ENCODE measurements at regions of chr20 and their contacts with region 1.

Region 1: GRCh38 chr20:37270576-37271420 is 9.2 kb upstream of the GHRH start:
- DNase-seq: peak in 1 of 9 experiments; percentile 40
- ATAC-seq: no peak
- H3K4me3 ChIP-seq: no peak overlapping the region
- H3K4me3 Mint-ChIP-seq: no peak overlapping the region
- H3K27ac ChIP-seq: no peak overlapping the region
- H3K27ac Mint-ChIP-seq: no peak overlapping the region
- H3K4me1 ChIP-seq: no peaks in the 10 kb centered on the region
- H3K4me1 Mint-ChIP-seq: no peaks in the 10 kb centered on the region
- H3K27me3 ChIP-seq: no peaks in the 10 kb centered on the region
- H3K27me3 Mint-ChIP-seq: no peaks in the 10 kb centered on the region
- CTCF ChIP-seq: no peak

Region 2: GRCh38 chr20:37384683-37385174 is 113.9 kb after region 1 on chr20:
- CTCF ChIA-PET with region 1: interaction called, 20 read pairs
- POLR2A ChIA-PET with region 1: no interaction called
- intact Hi-C with region 1: loop called in 1 of 2 experiments (anchors 1 kb)
- DNase-seq: peak; percentile 65 to 91 (median 74)
- ATAC-seq: peak; percentile 95
- H3K4me3 ChIP-seq: peak overlapping the region; percentile 41 to 46
- H3K4me3 Mint-ChIP-seq: peak overlapping the region; percentile 85
- H3K27ac ChIP-seq: no peak overlapping the region
- H3K27ac Mint-ChIP-seq: no peak overlapping the region
- H3K4me1 ChIP-seq: peaks cover 5% of the 10 kb centered on the region
- H3K4me1 Mint-ChIP-seq: peaks cover 8% of the 10 kb centered on the region
- H3K27me3 ChIP-seq: no peaks in the 10 kb centered on the region
- H3K27me3 Mint-ChIP-seq: peaks cover 3% of the 10 kb centered on the region
- CTCF ChIP-seq: peak; percentile 79